B cell (primary cell): ENCODE measurements at regions of chr20 and their contacts with region 1.

Region 1: DNA sequence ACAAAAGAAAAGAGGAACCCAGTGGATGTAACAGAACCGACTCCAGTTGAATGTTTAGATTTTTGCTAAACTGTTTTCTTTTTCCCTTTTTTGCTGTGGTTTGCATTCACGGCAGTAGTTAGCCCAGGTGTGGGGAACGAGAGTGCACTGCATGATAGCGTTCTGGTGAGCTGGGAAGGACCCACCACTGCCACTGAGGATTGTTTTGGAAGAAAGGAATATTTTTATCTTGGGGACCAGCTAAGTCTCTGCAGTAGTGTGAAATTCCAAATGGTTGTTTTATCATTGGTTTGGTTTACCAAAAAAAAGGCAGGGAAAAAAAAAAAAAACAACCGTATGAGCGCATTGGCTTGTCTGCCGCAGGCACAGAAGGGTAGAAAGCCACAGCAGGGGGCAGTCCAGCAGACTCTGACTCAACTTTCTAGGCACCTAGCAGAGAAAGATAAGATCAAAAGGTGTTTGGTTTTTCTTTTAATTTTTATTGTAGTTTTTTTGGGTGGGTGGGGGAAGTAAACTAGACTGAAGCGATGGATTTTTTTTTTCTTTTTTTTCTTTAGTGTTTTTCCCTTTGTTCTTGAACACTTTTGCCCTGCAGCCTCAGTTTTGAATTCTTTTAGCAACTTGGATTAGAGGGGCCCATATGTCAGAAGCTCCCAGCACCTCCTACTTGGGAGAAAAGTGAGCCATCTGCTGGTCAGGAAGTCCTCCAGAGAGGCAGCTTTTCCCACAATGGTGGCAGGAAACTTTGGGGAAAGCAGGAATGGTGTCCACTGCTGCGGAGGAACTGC is 13.5 kb upstream of the RAB5IF start:
- DNase-seq: no peak
- ATAC-seq: no peak
- H3K4me3 ChIP-seq: no peak overlapping the region
- H3K4me3 Mint-ChIP-seq: no peak overlapping the region
- H3K27ac ChIP-seq: peak overlapping the region in 1 of 2 donors; percentile 89
- H3K27ac Mint-ChIP-seq: peak overlapping the region; percentile 80
- H3K4me1 ChIP-seq: peaks cover 34 to 39% of the 10 kb centered on the region in 2 donors
- H3K4me1 Mint-ChIP-seq: peaks cover 55% of the 10 kb centered on the region
- H3K27me3 ChIP-seq: no peaks in the 10 kb centered on the region
- H3K27me3 Mint-ChIP-seq: no peaks in the 10 kb centered on the region
- CTCF ChIP-seq: no peak

Region 2: GRCh38 chr20:36573103-36573794 is 18.8 kb before region 1 on chr20 and contains the start of gene TGIF2:
- CTCF ChIA-PET with region 1: interaction called, 57 read pairs
- POLR2A ChIA-PET with region 1: interaction called, 81 read pairs
- intact Hi-C with region 1: loop called (anchors 1 kb)
- DNase-seq: peak; percentile 94
- ATAC-seq: peak; percentile 80
- H3K4me3 ChIP-seq: peak within 1 kb of the TSS; percentile 22 to 95 (median 88)
- H3K4me3 Mint-ChIP-seq: peak within 1 kb of the TSS; percentile 92
- H3K27ac ChIP-seq: peak within 1 kb of the TSS; percentile 97 to 100
- H3K27ac Mint-ChIP-seq: peak within 1 kb of the TSS; percentile 98
- H3K4me1 ChIP-seq: peaks cover 23 to 34% of the 10 kb centered on the region in 2 donors
- H3K4me1 Mint-ChIP-seq: peaks cover 34% of the 10 kb centered on the region
- H3K27me3 ChIP-seq: no peaks in the 10 kb centered on the region
- H3K27me3 Mint-ChIP-seq: no peaks in the 10 kb centered on the region
- CTCF ChIP-seq: no peak
- total RNA-seq, gene TGIF2: 45.6 and 46.1 TPM in 2 replicates

Region 3: GRCh38 chr20:36613974-36614373 is 21.9 kb after region 1 on chr20:
- CTCF ChIA-PET with region 1: interaction called, 6 read pairs
- POLR2A ChIA-PET with region 1: interaction called, 11 read pairs
- intact Hi-C with region 1: no loop called
- DNase-seq: no peak
- ATAC-seq: no peak
- H3K4me3 ChIP-seq: no peak overlapping the region
- H3K4me3 Mint-ChIP-seq: no peak overlapping the region
- H3K27ac ChIP-seq: no peak overlapping the region
- H3K27ac Mint-ChIP-seq: no peak overlapping the region
- H3K4me1 ChIP-seq: no peaks in the 10 kb centered on the region
- H3K4me1 Mint-ChIP-seq: no peaks in the 10 kb centered on the region
- H3K27me3 ChIP-seq: no peaks in the 10 kb centered on the region
- H3K27me3 Mint-ChIP-seq: no peaks in the 10 kb centered on the region
- CTCF ChIP-seq: no peak

Region 4: DNA sequence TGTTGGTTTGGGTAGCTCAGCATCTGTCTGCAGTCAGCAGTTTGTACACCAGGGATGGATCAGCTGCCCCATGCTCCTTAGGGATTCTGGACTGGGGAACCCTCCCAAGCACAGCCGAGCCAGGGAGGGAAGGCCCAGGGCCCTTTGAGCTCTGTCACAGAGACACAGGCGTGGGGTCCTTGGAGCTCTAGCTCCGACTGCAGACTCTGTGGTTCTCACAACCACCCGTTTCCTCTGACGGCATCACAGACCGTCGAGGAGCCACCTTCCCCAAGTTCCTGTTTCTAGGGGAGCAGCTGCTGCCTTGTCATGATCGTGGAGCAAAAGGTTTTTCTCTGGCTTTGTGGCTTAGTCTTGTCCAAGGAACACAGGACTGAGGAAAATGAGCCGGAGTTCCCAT is 54.0 kb after region 1 on chr20 and contains the start of gene SLA2:
- CTCF ChIA-PET with region 1: interaction called, 3 read pairs
- POLR2A ChIA-PET with region 1: interaction called, 10 read pairs
- intact Hi-C with region 1: no loop called
- DNase-seq: peak; percentile 60
- ATAC-seq: peak; percentile 86
- H3K4me3 ChIP-seq: no peak within 1 kb of the TSS
- H3K4me3 Mint-ChIP-seq: peak within 1 kb of the TSS; percentile 39
- H3K27ac ChIP-seq: no peak within 1 kb of the TSS
- H3K27ac Mint-ChIP-seq: peak within 1 kb of the TSS; percentile 80
- H3K4me1 ChIP-seq: peaks cover 9 to 13% of the 10 kb centered on the region in 2 donors
- H3K4me1 Mint-ChIP-seq: peaks cover 27% of the 10 kb centered on the region
- H3K27me3 ChIP-seq: no peaks in the 10 kb centered on the region
- H3K27me3 Mint-ChIP-seq: no peaks in the 10 kb centered on the region
- CTCF ChIP-seq: no peak
- total RNA-seq, gene SLA2: 0.58 and 0.76 TPM in 2 replicates

Region 5: DNA sequence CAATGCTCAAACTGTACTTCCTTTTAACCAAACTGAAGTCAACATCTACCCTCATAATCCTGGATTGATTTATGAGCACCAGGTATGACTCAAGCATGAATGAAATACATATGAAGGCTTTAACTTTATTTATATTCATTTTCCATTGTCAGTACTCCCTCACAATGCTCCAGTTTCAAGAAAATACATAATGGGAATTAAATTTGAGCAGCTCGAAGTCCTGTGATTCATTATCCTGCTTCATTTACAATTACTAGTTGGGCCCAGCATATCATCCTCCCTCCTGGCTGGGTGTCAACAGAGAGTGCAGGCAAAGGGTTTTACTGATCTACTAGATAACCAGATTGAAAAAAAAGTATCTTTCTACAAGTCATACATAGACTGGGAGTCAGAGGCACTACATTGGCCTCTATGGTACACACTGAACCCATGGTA is 349.4 kb after region 1 on chr20:
- CTCF ChIA-PET with region 1: no interaction called
- POLR2A ChIA-PET with region 1: no interaction called
- intact Hi-C with region 1: no loop called
- DNase-seq: no peak
- ATAC-seq: no peak
- H3K4me3 ChIP-seq: no peak overlapping the region
- H3K4me3 Mint-ChIP-seq: no peak overlapping the region
- H3K27ac ChIP-seq: no peak overlapping the region
- H3K27ac Mint-ChIP-seq: no peak overlapping the region
- H3K4me1 ChIP-seq: no peaks in the 10 kb centered on the region
- H3K4me1 Mint-ChIP-seq: no peaks in the 10 kb centered on the region
- H3K27me3 ChIP-seq: no peaks in the 10 kb centered on the region
- H3K27me3 Mint-ChIP-seq: no peaks in the 10 kb centered on the region
- CTCF ChIP-seq: no peak

Region 6: DNA sequence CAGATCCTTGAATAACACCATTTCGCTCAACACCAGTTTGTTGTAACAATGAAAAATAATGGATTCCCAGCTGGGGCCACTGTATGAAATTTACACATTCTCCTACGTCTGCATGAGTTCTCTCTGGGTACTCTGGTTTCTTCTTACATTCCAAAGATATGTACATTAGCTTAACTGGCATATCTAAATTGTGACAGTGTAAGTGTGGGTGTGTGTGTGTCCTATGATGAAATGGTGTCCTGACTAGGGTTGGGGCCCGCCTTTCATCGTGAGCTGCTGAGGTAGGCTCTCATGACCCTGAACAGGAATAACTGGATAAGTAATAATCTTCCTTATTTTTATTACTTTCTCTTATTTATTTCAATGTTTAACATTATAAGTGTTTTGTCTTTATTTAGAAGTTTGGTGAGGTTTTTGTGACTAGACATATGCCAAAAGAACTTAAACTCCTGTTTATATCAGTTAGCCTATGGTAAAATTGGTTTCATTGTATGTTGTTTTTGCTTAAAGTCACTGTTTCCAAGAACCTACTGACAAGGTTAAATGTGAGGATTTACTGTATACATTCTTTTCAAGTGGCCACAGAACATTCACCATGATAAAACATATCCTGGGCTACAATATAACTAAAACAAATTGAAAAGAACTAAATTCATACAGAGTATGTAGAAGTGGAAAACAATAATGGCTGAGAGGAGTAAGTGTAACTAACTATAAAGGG is 461.3 kb after region 1 on chr20:
- CTCF ChIA-PET with region 1: no interaction called
- POLR2A ChIA-PET with region 1: no interaction called
- intact Hi-C with region 1: no loop called
- DNase-seq: no peak
- ATAC-seq: no peak
- H3K4me3 ChIP-seq: no peak overlapping the region
- H3K4me3 Mint-ChIP-seq: no peak overlapping the region
- H3K27ac ChIP-seq: no peak overlapping the region
- H3K27ac Mint-ChIP-seq: no peak overlapping the region
- H3K4me1 ChIP-seq: no peaks in the 10 kb centered on the region
- H3K4me1 Mint-ChIP-seq: no peaks in the 10 kb centered on the region
- H3K27me3 ChIP-seq: no peaks in the 10 kb centered on the region
- H3K27me3 Mint-ChIP-seq: no peaks in the 10 kb centered on the region
- CTCF ChIP-seq: no peak